Activated B cell treated with CpG ODN at 0.5 μM for 24 hours (primary cell): ENCODE measurements at regions of chr2 and their contacts with region 1.

Region 1: GRCh38 chr2:30436859-30437435 is 10.1 kb upstream of the LCLAT1 start:
- DNase-seq: peak; percentile 20
- ATAC-seq: peak; percentile 89
- H3K4me3 Mint-ChIP-seq: peak overlapping the region; percentile 65
- H3K27ac Mint-ChIP-seq: peak overlapping the region; percentile 90
- H3K4me1 Mint-ChIP-seq: peaks cover 44% of the 10 kb centered on the region
- H3K27me3 Mint-ChIP-seq: no peaks in the 10 kb centered on the region
- CTCF ChIP-seq: no peak

Region 2: GRCh38 chr2:30287857-30288513 is 149.0 kb before region 1 on chr2:
- CTCF ChIA-PET with region 1: no interaction called
- POLR2A ChIA-PET with region 1: interaction called, 6 read pairs
- intact Hi-C with region 1: loop called (anchors 5 kb)
- DNase-seq: peak; percentile 53
- ATAC-seq: peak; percentile 83
- H3K4me3 Mint-ChIP-seq: peak overlapping the region; percentile 83
- H3K27ac Mint-ChIP-seq: peak overlapping the region; percentile 92
- H3K4me1 Mint-ChIP-seq: peaks cover 92% of the 10 kb centered on the region
- H3K27me3 Mint-ChIP-seq: no peaks in the 10 kb centered on the region
- CTCF ChIP-seq: no peak

Region 3: GRCh38 chr2:30373881-30374302 is 63.1 kb before region 1 on chr2:
- CTCF ChIA-PET with region 1: no interaction called
- POLR2A ChIA-PET with region 1: no interaction called
- intact Hi-C with region 1: loop called (anchors 5 kb)
- DNase-seq: no peak
- ATAC-seq: no peak
- H3K4me3 Mint-ChIP-seq: no peak overlapping the region
- H3K27ac Mint-ChIP-seq: no peak overlapping the region
- H3K4me1 Mint-ChIP-seq: peaks cover 26% of the 10 kb centered on the region
- H3K27me3 Mint-ChIP-seq: no peaks in the 10 kb centered on the region
- CTCF ChIP-seq: no peak

Region 4: GRCh38 chr2:30404319-30404953 is 32.5 kb before region 1 on chr2:
- CTCF ChIA-PET with region 1: no interaction called
- POLR2A ChIA-PET with region 1: no interaction called
- intact Hi-C with region 1: no loop called
- DNase-seq: no peak
- ATAC-seq: no peak
- H3K4me3 Mint-ChIP-seq: no peak overlapping the region
- H3K27ac Mint-ChIP-seq: no peak overlapping the region
- H3K4me1 Mint-ChIP-seq: peaks cover 9% of the 10 kb centered on the region
- H3K27me3 Mint-ChIP-seq: no peaks in the 10 kb centered on the region
- CTCF ChIP-seq: no peak

Region 5: GRCh38 chr2:30421604-30422443 is 15.1 kb before region 1 on chr2:
- CTCF ChIA-PET with region 1: no interaction called
- POLR2A ChIA-PET with region 1: interaction called, 22 read pairs
- intact Hi-C with region 1: loop called (anchors 1 kb)
- DNase-seq: no peak
- ATAC-seq: peak; percentile 60
- H3K4me3 Mint-ChIP-seq: peak overlapping the region; percentile 39
- H3K27ac Mint-ChIP-seq: peak overlapping the region; percentile 82
- H3K4me1 Mint-ChIP-seq: peaks cover 42% of the 10 kb centered on the region
- H3K27me3 Mint-ChIP-seq: no peaks in the 10 kb centered on the region
- CTCF ChIP-seq: no peak

Region 6: GRCh38 chr2:30447149-30448045 is 10.4 kb after region 1 on chr2 and contains the start of gene LCLAT1:
- CTCF ChIA-PET with region 1: interaction called, 7 read pairs
- POLR2A ChIA-PET with region 1: interaction called, 7 read pairs
- intact Hi-C with region 1: loop called (anchors 1 kb)
- DNase-seq: peak; percentile 80
- ATAC-seq: peak; percentile 94
- H3K4me3 Mint-ChIP-seq: peak within 1 kb of the TSS; percentile 96
- H3K27ac Mint-ChIP-seq: peak within 1 kb of the TSS; percentile 95
- H3K4me1 Mint-ChIP-seq: peaks cover 25% of the 10 kb centered on the region
- H3K27me3 Mint-ChIP-seq: no peaks in the 10 kb centered on the region
- CTCF ChIP-seq: no peak
- total RNA-seq, gene LCLAT1: 20.1 and 25.9 TPM in 2 replicates